ENCODE measurements at regions of chr2 and their contacts with region 1.

Region 1: DNA sequence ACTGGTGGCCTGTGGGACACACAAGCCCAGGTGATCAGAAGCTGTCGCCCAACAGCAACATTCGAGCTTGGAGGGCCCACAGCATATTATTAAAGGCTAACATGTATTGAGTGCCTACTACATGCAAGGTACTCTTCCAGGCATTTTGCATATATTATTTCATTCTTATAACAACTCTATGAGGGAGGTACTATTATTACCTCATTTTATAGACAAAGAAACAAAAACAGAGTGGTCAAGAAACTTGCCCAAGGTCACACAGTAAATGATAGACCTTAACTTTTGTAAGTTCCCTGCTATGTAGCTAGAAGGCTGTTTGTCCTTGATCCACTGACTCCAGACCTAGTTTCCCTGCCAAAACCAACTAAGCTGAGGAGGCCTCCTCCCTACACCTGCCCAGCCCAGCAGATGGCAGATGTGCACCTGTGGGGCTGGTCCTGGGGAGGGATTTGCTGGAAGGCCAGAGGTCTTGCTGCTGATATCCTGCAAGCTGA is 35.7 kb downstream of the KANSL3 start:
- DNase-seq: no peak
- ATAC-seq: no peak
- H3K4me3 Mint-ChIP-seq: no peak overlapping the region
- H3K27ac Mint-ChIP-seq: no peak overlapping the region
- H3K4me1 Mint-ChIP-seq: no peaks in the 10 kb centered on the region
- H3K27me3 Mint-ChIP-seq: no peaks in the 10 kb centered on the region
- CTCF ChIP-seq: no peak

Region 2: DNA sequence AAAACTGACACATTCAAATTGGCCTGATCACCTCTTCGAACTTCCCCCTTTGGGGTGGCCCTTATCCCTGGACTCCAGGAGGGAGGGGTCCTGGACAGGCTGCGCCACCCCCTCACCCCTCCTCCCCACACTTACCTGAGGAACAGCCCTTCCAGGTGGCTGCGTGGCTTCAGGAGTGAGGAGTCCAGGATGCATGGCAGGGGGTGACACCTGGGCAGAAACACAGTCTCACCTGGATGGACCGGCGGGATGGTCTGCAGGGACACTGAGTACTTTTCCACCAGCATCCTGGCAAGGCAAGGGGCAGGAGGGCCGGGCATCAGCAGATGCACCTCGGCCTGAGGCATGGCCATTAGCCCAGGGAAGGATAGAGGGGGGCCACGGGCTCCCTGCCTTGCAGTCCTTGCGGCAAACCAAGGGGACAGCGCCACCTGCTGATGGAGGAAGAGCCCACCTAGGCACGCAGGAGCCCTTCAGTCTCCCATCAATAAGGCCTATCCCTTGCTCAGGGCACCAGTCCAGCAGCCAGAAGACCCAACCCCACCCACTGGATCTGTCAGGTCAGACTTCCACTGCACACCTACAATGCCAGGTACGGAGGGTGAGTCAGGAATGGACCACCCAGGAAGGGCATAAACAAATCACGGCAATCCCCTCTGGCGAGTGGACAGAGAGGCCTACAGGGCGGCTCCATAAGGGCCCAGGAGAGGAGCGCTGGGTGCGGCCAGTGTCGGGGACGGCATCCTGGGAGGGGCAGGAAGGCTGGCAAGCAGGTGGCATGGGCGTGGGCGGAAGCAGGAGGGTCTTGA is 358.0 kb after region 1 on chr2:
- CTCF ChIA-PET with region 1: no interaction called
- POLR2A ChIA-PET with region 1: no interaction called
- intact Hi-C with region 1: loop called (anchors 5 kb)
- DNase-seq: peak; percentile 70
- ATAC-seq: peak; percentile 96
- H3K4me3 Mint-ChIP-seq: no peak overlapping the region
- H3K27ac Mint-ChIP-seq: no peak overlapping the region
- H3K4me1 Mint-ChIP-seq: peaks cover 13% of the 10 kb centered on the region
- H3K27me3 Mint-ChIP-seq: no peaks in the 10 kb centered on the region
- CTCF ChIP-seq: peak; percentile 66

Measured in activated B cell treated with CpG ODN at 0.5 μM for 24 hours (primary cell).